ENCODE measurements at regions of chr7 and their contacts with region 1.

Region 1: GRCh38 chr7:43377196-43377960 is 205.5 kb upstream of the STK17A start:
- DNase-seq: no peak
- ATAC-seq: no peak
- H3K4me3 ChIP-seq: no peak overlapping the region
- H3K27ac ChIP-seq: no peak overlapping the region
- H3K4me1 ChIP-seq: no peaks in the 10 kb centered on the region
- H3K27me3 ChIP-seq: peaks cover 0 to 13% (median 3%) of the 10 kb centered on the region in 7 donors
- CTCF ChIP-seq: no peak

Region 2: GRCh38 chr7:43353902-43354301 is 23.5 kb before region 1 on chr7:
- intact Hi-C with region 1: loop called in 1 of 10 experiments (anchors 2 kb)
- DNase-seq: no peak
- ATAC-seq: no peak
- H3K4me3 ChIP-seq: no peak overlapping the region
- H3K27ac ChIP-seq: no peak overlapping the region
- H3K4me1 ChIP-seq: no peaks in the 10 kb centered on the region
- H3K27me3 ChIP-seq: peaks cover 0 to 15% (median 0%) of the 10 kb centered on the region in 7 donors
- CTCF ChIP-seq: no peak

Measured in heart right ventricle (tissue), 16 donors.